HepG2 (cell line): ENCODE measurements at regions of chr3 and their contacts with region 1.

Region 1: GRCh38 chr3:195160257-195160898 is 110.6 kb downstream of the XXYLT1 start:
- DNase-seq: peak; percentile 95
- ATAC-seq: peak; percentile 65
- H3K4me3 ChIP-seq: peak overlapping the region in 1 of 3 experiments; percentile 3; a peak in 1 of 6 replicates
- H3K27ac ChIP-seq: peak overlapping the region; percentile 100
- H3K4me1 ChIP-seq: peaks cover 100% of the 10 kb centered on the region
- H3K27me3 ChIP-seq: no peaks in the 10 kb centered on the region
- CTCF ChIP-seq: no peak
- EP300 ChIP-seq: peak in 1 of 2 experiments; percentile 76; a peak in 2 of 4 replicates
- POLR2A ChIP-seq: peak in 1 of 2 experiments; percentile 18; a peak in 1 of 4 replicates
- RAD21 ChIP-seq: no peak

Region 2: DNA sequence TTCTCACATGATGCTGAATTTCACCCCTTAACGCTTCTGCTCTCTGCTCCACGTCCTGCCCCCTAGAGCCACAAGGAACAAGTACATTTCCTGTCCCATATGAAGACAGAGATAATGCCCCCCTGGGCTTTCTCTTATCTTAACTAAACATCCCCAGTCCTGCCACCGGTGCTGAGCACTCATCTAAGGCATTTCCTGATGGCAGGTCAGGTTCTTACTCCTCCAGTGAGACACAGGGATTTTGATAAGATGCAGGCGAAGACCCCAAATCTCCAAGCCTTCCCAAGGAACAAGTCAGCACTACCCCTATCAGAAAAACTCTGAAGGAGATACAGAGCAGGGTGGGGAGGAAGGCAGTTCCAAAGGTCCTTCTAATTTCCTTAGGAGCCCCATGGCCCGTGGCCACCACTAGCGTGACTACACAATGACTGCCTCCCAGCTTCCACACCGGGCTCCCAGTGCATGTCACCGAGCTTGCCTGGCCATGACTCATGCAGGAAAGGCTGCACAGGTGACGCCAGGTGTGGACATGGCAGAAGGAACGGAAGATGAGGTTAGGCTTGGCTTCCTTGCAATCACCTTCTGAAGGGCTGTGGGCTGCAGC is 42.3 kb before region 1 on chr3:
- CTCF ChIA-PET with region 1: no interaction called
- POLR2A ChIA-PET with region 1: interaction called, 3 read pairs
- in situ Hi-C with region 1: no loop called
- intact Hi-C with region 1: loop called (anchors 2 kb)
- DNase-seq: no peak
- ATAC-seq: peak; percentile 10; the same call in 1 of the 3 replicates
- H3K4me3 ChIP-seq: no peak overlapping the region
- H3K27ac ChIP-seq: peak overlapping the region; percentile 19
- H3K4me1 ChIP-seq: peaks cover 56% of the 10 kb centered on the region
- H3K27me3 ChIP-seq: no peaks in the 10 kb centered on the region
- CTCF ChIP-seq: no peak
- EP300 ChIP-seq: no peak
- POLR2A ChIP-seq: no peak
- RAD21 ChIP-seq: no peak

Region 3: DNA sequence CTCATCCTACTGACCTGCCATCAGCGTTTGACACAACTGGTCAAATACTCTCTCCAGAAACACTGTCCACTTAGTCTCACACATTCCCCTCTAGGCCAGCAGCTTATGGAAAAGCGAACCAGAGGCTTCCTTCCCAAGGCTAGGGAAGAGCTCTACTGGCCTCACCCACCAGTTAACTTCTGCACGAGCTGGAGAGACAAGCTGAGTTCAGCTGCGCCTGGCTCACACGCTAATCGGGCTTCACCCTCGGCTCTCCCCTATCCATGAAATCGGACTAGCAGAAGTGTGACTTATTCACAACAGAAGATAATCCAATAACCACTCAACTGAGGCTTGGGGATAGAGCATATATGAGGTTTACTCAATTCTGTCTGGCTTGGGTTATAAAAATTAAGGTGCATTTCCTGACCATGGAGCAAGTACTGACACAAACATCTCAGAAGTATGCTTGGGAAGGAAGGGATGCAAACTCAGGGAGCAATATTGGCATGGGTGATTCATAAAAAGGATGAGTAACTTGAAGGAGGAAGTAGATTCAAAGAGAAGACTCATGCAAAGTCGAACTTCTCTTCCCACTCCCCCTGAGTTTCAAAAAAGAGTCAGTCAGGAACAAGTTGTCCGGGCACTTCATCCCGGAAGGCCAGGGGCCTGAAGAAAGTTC is 37.5 kb after region 1 on chr3:
- CTCF ChIA-PET with region 1: no interaction called
- POLR2A ChIA-PET with region 1: interaction called, 3 read pairs
- in situ Hi-C with region 1: no loop called
- intact Hi-C with region 1: loop called (anchors 2 kb)
- DNase-seq: no peak
- ATAC-seq: no peak
- H3K4me3 ChIP-seq: no peak overlapping the region
- H3K27ac ChIP-seq: peak overlapping the region; percentile 72
- H3K4me1 ChIP-seq: peaks cover 77% of the 10 kb centered on the region
- H3K27me3 ChIP-seq: no peaks in the 10 kb centered on the region
- CTCF ChIP-seq: no peak
- EP300 ChIP-seq: no peak
- POLR2A ChIP-seq: no peak
- RAD21 ChIP-seq: no peak